ENCODE measurements at regions of chr20 and their contacts with region 1.

Region 1: DNA sequence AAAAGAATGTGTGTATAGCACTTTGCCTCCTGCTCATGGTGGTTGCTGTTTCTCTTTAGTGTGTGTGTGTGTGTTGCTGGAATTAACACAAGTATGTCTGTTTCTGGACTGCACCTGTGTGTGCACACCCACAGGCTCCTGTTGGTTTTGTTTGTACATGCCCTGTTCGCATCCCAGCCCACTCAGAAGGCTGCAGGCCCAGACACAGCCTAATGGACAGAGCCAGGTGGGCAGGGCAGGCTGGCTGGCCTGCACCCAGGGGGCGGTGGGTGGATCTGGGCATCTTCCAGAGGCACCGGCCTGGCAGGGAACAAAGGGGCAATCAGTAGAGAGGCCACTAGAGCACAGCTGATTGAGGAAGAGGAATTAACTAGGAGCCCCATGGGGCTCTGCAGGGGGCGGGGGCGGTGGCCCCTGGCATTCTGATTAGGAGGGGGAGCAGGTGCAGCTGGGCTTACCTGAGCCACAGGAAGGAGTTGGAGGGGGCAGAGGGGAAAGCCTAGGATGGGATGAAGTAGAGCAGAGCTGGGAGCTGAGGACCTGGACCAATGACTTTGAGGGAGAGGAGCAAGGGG is 21.9 kb downstream of the CD40 start:
- DNase-seq: no peak
- H3K4me3 ChIP-seq: no peak overlapping the region
- H3K27ac ChIP-seq: no peak overlapping the region
- H3K4me1 ChIP-seq: no peaks in the 10 kb centered on the region
- H3K27me3 ChIP-seq: no peaks in the 10 kb centered on the region
- CTCF ChIP-seq: no peak
- EP300 ChIP-seq: no peak
- POLR2A ChIP-seq: no peak

Region 2: DNA sequence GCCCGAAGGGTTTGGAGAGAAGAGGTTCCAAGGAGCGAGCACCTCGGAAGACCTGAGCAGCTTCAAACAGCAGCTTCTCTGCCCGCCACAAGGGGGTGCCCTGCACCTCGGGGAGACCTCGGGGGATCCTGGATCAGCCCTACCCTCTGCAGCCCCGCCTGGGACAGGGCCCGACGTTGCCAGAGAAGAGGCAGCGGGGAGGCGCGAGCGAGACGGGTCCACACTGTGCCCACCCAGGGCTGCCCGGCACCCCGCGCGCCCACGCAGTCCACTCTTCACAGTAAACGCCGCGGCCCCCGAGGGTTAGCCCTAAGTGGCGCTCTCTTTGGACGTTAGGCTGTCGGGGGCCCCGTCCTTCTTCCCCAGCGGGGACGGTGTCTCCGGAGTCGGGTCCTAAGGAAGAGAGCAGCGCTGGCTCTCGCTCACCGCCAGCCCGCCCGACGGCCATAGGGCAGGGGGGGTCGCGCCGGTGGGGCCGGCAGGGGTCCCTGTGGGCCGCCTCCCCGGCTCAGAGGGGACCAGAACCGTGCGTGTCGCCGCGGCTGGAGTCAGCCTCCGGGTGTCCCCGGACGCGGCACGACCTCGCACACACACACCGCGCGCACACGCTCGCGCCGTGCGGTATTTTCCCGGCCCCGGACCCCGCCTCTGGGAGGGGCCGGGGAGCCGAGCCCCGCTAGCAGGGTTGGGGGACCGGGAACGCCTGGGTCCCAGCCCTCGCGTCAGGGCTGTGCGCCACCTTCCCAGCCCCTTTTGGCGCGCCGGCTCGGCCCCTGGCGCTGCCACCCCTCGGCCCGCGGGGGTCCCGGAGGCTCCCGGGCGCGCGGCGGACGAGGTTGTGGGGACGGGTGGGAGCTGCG is 167.4 kb after region 1 on chr20:
- intact Hi-C with region 1: loop called in 2 of 4 experiments (anchors 5 to 10 kb)
- DNase-seq: peak in 4 of 5 donors; percentile 22 to 49 (median 30)
- H3K4me3 ChIP-seq: peak overlapping the region; percentile 20
- H3K27ac ChIP-seq: no peak overlapping the region
- H3K4me1 ChIP-seq: no peaks in the 10 kb centered on the region
- H3K27me3 ChIP-seq: no peaks in the 10 kb centered on the region
- CTCF ChIP-seq: peak in 2 of 3 donors; percentile 16 to 19
- EP300 ChIP-seq: no peak
- POLR2A ChIP-seq: no peak

Region 3: GRCh38 chr20:46349035-46349741 is 209.2 kb after region 1 on chr20:
- intact Hi-C with region 1: loop called in 1 of 4 experiments (anchors 5 kb)
- DNase-seq: peak; percentile 32 to 76 (median 54)
- H3K4me3 ChIP-seq: no peak overlapping the region
- H3K27ac ChIP-seq: no peak overlapping the region
- H3K4me1 ChIP-seq: peaks cover 1% of the 10 kb centered on the region
- H3K27me3 ChIP-seq: no peaks in the 10 kb centered on the region
- CTCF ChIP-seq: peak in 2 of 3 donors; percentile 10 to 38
- EP300 ChIP-seq: no peak
- POLR2A ChIP-seq: no peak

Region 4: DNA sequence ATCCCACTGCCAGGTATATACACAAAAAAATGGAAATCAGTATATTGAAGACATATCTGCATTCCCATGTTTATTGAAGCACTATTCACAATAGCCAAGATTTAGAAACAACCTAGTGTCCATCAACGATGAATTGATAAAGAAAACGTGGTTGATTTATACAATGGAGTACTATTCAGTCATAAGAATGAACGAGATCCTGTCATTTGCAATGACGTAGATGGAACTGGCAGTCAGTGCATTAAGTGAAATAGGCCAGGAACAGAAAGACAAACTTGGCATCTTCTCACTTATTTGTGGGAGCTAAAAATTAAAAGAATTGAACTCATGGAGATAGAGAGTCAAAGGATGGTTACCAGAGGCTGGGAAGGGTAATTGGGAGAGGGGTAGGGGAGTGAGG is 287.9 kb after region 1 on chr20:
- intact Hi-C with region 1: loop called in 1 of 4 experiments (anchors 5 kb)
- DNase-seq: no peak
- H3K4me3 ChIP-seq: no peak overlapping the region
- H3K27ac ChIP-seq: no peak overlapping the region
- H3K4me1 ChIP-seq: peaks cover 1% of the 10 kb centered on the region
- H3K27me3 ChIP-seq: no peaks in the 10 kb centered on the region
- CTCF ChIP-seq: no peak
- EP300 ChIP-seq: no peak
- POLR2A ChIP-seq: no peak